ENCODE measurements at regions of chr6 and their contacts with region 1.

Region 1: GRCh38 chr6:110958329-110959192 is at the start of gene GTF3C6:
- DNase-seq: peak; percentile 96 to 97
- ATAC-seq: peak; percentile 99
- H3K4me3 ChIP-seq: peak within 1 kb of the TSS; percentile 51 to 73
- H3K27ac ChIP-seq: peak within 1 kb of the TSS; percentile 36 to 76
- H3K4me1 ChIP-seq: no peaks in the 10 kb centered on the region
- H3K27me3 ChIP-seq: no peaks in the 10 kb centered on the region
- total RNA-seq, gene GTF3C6: 43.0 to 46.6 TPM

Region 2: GRCh38 chr6:110815217-110816109 is 143.1 kb before region 1 on chr6 and contains the start of gene CDK19:
- intact Hi-C with region 1: loop called (anchors 5 to 10 kb)
- DNase-seq: peak; percentile 99
- ATAC-seq: peak; percentile 97
- H3K4me3 ChIP-seq: peak within 1 kb of the TSS; percentile 71 to 80
- H3K27ac ChIP-seq: peak within 1 kb of the TSS; percentile 58 to 91
- H3K4me1 ChIP-seq: no peaks in the 10 kb centered on the region
- H3K27me3 ChIP-seq: no peaks in the 10 kb centered on the region
- total RNA-seq, gene CDK19: 19.5 to 22.4 TPM

Region 3: GRCh38 chr6:110981202-110981600 is 22.6 kb after region 1 on chr6:
- intact Hi-C with region 1: loop called in 1 of 2 experiments (anchors 2 kb)
- DNase-seq: no peak
- ATAC-seq: no peak
- H3K4me3 ChIP-seq: peak overlapping the region; percentile 28 to 98
- H3K27ac ChIP-seq: no peak overlapping the region
- H3K4me1 ChIP-seq: no peaks in the 10 kb centered on the region
- H3K27me3 ChIP-seq: no peaks in the 10 kb centered on the region

Region 4: DNA sequence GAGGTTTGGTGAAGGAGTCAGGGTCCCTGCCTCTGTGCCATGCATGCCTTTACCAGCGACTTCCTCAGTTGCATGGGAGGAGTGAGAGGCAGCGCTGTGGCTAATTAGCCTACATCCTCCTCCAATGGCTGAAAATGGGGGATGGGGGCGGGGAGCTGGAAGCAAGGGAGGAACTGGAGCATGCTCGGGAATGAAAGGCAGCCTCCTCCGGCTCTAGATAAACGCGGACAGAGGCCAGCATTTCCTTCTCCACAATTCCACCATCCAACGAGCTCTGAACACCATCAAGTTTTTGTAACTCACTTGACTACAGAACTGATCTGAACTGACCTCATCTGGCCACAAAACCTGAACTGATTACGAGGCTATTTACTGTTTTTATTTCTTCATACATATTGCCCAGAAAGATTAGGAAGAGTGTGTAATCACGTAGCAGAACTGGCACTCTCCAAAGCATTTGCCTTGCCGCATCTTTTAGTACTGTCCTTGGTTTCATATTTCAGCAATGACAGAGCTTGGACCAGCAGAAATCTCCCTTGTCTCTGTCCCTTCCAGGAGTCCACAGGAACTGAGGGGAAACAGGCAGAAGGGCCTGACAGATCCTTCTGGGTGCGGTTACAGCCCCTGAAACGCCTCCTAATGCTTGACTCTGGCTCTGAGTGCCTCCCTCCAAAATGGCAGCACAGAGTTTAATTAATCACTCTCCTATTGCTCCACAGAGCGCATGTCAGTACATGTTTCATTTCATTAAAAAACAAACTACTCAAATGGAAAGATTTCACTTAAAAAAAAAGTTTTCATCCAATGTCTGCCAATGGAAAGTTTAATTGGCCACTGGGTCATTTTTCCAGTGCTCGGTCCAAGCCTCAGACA is 705.4 kb after region 1 on chr6:
- intact Hi-C with region 1: no loop called
- DNase-seq: peak in 1 of 2 donors; percentile 74
- ATAC-seq: peak; percentile 73
- H3K4me3 ChIP-seq: no peak overlapping the region
- H3K27ac ChIP-seq: peak overlapping the region; percentile 37 to 81
- H3K4me1 ChIP-seq: peaks cover 0 to 4% of the 10 kb centered on the region in 2 donors
- H3K27me3 ChIP-seq: no peaks in the 10 kb centered on the region

Measured in aorta (tissue), 5 donors.